ENCODE measurements at regions of chr20 and their contacts with region 1.

Region 1: GRCh38 chr20:17682103-17682888 is at the start of gene RRBP1:
- DNase-seq: peak; percentile 97
- ATAC-seq: peak; percentile 92
- H3K4me3 ChIP-seq: peak within 1 kb of the TSS; percentile 96
- H3K27ac ChIP-seq: peak within 1 kb of the TSS; percentile 94
- H3K4me1 ChIP-seq: peaks cover 13% of the 10 kb centered on the region
- H3K27me3 ChIP-seq: peaks cover 4% of the 10 kb centered on the region
- CTCF ChIP-seq: peak; percentile 69
- POLR2A ChIP-seq: peak; percentile 97
- RAD21 ChIP-seq: peak; percentile 27; the same call in 1 of the 2 replicates
- total RNA-seq, gene RRBP1: 90.2 and 99.7 TPM in 2 replicates

Region 2: DNA sequence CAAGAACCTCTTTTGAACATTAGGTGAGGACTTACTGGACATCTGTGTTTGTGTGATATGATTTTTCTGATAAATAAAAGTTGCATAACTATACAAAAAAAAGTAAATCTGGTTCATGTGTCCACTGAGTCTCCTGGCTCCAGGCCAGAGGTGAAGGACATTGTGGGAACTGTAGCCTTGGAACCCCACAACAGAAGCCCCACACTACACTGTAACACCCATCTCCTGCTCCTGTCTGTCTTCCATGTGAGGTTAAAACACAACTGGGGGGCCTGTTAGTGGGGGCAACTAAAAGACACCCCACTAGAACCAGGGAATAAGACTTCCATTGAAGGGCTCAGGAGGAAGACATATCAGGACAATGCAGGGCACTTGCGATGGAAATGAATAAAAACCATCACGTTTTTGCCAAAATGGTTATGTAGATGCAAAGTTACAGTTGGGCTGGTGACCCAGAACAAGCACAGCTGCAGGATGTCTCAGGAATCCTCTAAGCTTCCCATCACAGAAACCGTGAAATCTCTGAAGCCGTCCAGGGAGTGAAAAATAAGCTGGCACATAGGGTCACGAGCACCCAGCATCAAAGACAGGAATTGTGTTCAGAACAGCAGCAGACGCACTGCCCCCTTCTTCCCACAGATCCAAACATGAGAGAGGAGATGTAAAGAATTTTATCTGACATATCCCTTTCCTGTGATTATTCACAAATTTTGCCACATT is 492.2 kb before region 1 on chr20:
- CTCF ChIA-PET with region 1: no interaction called
- POLR2A ChIA-PET with region 1: no interaction called
- dilution Hi-C with region 1: no loop called
- in situ Hi-C with region 1: no loop called
- intact Hi-C with region 1: no loop called
- DNase-seq: no peak
- ATAC-seq: no peak
- H3K4me3 ChIP-seq: no peak overlapping the region
- H3K27ac ChIP-seq: no peak overlapping the region
- H3K4me1 ChIP-seq: no peaks in the 10 kb centered on the region
- H3K27me3 ChIP-seq: no peaks in the 10 kb centered on the region
- CTCF ChIP-seq: no peak
- POLR2A ChIP-seq: no peak
- RAD21 ChIP-seq: no peak

Region 3: DNA sequence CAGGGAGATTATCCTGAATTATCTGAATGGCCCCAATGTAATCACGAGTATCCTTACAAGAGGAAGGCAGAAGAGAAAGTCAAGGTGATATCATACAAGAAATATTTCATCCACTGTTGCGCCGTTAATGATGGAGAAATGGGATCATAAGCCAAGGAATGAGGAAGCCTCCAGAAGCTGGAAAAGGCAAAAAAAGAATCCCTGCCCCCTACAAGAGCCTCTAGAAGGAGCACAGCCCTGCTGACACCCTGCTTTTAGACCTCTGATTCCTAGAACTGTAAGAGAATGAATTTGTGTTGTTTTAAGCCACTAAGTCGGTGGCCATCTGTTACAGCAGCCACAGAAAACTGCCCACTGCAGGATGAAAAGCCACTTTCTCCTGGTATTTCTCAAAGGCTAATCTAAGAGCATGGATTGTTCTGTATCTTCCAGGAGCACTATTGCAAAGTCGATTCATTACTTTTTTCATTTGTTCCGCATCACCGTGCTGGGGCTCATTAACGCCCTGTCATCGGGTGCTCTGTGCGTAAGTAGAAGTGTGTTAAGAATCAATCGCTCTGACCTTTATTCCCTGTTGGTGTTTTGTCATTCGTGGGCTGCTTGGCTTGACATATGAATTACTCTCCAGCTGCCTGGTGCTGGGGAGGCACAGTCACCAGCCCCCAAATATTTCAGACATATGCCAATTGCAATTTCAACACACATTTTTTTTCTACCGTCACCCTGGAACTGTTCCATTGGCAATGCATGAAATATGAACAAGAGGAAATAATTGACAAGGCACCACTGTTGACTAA is 338.4 kb before region 1 on chr20:
- CTCF ChIA-PET with region 1: no interaction called
- POLR2A ChIA-PET with region 1: no interaction called
- dilution Hi-C with region 1: no loop called
- in situ Hi-C with region 1: no loop called
- intact Hi-C with region 1: no loop called
- DNase-seq: no peak
- ATAC-seq: no peak
- H3K4me3 ChIP-seq: no peak overlapping the region
- H3K27ac ChIP-seq: peak overlapping the region; percentile 24; the same call in 1 of the 2 replicates
- H3K4me1 ChIP-seq: peaks cover 4% of the 10 kb centered on the region; the same call in 1 of the 2 replicates
- H3K27me3 ChIP-seq: no peaks in the 10 kb centered on the region; the same call in 1 of the 2 replicates
- CTCF ChIP-seq: no peak
- POLR2A ChIP-seq: no peak
- RAD21 ChIP-seq: no peak

Region 4: DNA sequence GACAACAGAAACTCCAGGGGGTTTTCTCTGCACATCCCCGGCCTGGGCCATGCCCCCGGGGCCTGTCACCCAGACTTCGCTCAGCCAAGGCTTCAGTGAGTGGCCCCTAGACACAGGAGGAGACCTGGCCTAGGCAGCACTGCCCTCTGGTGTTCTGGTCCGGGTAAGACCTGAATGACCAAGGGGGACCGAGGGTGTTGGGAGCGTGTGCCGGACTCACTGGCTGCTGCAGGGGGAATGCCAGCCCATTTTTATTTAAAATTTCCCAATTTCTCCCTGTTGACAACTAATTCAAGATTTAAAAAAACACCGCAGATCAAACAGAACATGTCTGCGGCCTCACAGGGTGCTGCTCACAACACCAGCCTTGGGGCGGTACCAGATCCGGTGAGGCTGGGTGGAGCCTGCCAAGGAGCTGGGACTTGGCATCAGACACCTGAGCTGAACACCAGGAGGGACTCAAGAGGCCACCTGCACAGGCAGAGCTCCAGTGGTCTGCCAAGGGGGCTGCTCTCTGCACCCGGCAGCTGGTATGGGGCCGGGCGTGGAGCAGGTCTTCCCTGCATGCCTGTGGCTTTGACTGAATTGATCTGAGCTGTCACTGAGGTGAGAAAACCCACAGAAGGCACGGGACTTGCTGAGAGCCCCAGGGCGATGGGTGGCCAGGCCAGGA is 64.6 kb before region 1 on chr20:
- CTCF ChIA-PET with region 1: no interaction called
- POLR2A ChIA-PET with region 1: no interaction called
- dilution Hi-C with region 1: no loop called
- in situ Hi-C with region 1: no loop called
- intact Hi-C with region 1: no loop called
- DNase-seq: no peak
- ATAC-seq: peak; percentile 38
- H3K4me3 ChIP-seq: no peak overlapping the region
- H3K27ac ChIP-seq: no peak overlapping the region
- H3K4me1 ChIP-seq: no peaks in the 10 kb centered on the region; the same call in 1 of the 2 replicates
- H3K27me3 ChIP-seq: no peaks in the 10 kb centered on the region
- CTCF ChIP-seq: peak; percentile 53
- POLR2A ChIP-seq: no peak
- RAD21 ChIP-seq: peak; percentile 70

Region 5: GRCh38 chr20:17749975-17750721 is 67.9 kb after region 1 on chr20:
- CTCF ChIA-PET with region 1: no interaction called
- POLR2A ChIA-PET with region 1: no interaction called
- dilution Hi-C with region 1: no loop called
- in situ Hi-C with region 1: no loop called
- intact Hi-C with region 1: loop called (anchors 5 kb)
- DNase-seq: peak; percentile 65
- ATAC-seq: 0 out of 2 replicates have a peak, but pooled peaks have one; percentile 31
- H3K4me3 ChIP-seq: no peak overlapping the region
- H3K27ac ChIP-seq: no peak overlapping the region
- H3K4me1 ChIP-seq: peaks cover 8% of the 10 kb centered on the region
- H3K27me3 ChIP-seq: peaks cover 25% of the 10 kb centered on the region
- CTCF ChIP-seq: no peak
- POLR2A ChIP-seq: no peak
- RAD21 ChIP-seq: no peak

Region 6: GRCh38 chr20:17843246-17844132 is 161.2 kb after region 1 on chr20:
- CTCF ChIA-PET with region 1: interaction called, 8 read pairs
- POLR2A ChIA-PET with region 1: interaction called, 5 read pairs
- dilution Hi-C with region 1: no loop called
- in situ Hi-C with region 1: no loop called
- intact Hi-C with region 1: loop called (anchors 2 kb)
- DNase-seq: peak; percentile 97
- ATAC-seq: peak; percentile 87
- H3K4me3 ChIP-seq: no peak overlapping the region; the same call in 1 of the 2 replicates
- H3K27ac ChIP-seq: peak overlapping the region; percentile 90
- H3K4me1 ChIP-seq: peaks cover 24% of the 10 kb centered on the region
- H3K27me3 ChIP-seq: no peaks in the 10 kb centered on the region
- CTCF ChIP-seq: no peak
- POLR2A ChIP-seq: no peak; the same call in 1 of the 2 replicates
- RAD21 ChIP-seq: peak; percentile 23; the same call in 1 of the 2 replicates

Region 7: GRCh38 chr20:17898548-17898994 is 216.3 kb after region 1 on chr20:
- CTCF ChIA-PET with region 1: interaction called, 4 read pairs
- POLR2A ChIA-PET with region 1: interaction called, 4 read pairs
- dilution Hi-C with region 1: no loop called
- in situ Hi-C with region 1: loop called (anchors 5 kb)
- intact Hi-C with region 1: loop called (anchors 1 kb)
- DNase-seq: peak; percentile 75
- ATAC-seq: peak; percentile 70
- H3K4me3 ChIP-seq: no peak overlapping the region
- H3K27ac ChIP-seq: no peak overlapping the region
- H3K4me1 ChIP-seq: peaks cover 13% of the 10 kb centered on the region
- H3K27me3 ChIP-seq: no peaks in the 10 kb centered on the region
- CTCF ChIP-seq: peak; percentile 95
- POLR2A ChIP-seq: 0 out of 2 replicates have a peak, but pooled peaks have one; percentile 34
- RAD21 ChIP-seq: peak; percentile 99

Region 8: GRCh38 chr20:17938871-17939619 is 256.7 kb after region 1 on chr20:
- CTCF ChIA-PET with region 1: interaction called, 3 read pairs
- POLR2A ChIA-PET with region 1: no interaction called
- dilution Hi-C with region 1: no loop called
- in situ Hi-C with region 1: no loop called
- intact Hi-C with region 1: loop called (anchors 1 kb)
- DNase-seq: peak; percentile 67
- ATAC-seq: peak; percentile 77
- H3K4me3 ChIP-seq: no peak overlapping the region
- H3K27ac ChIP-seq: no peak overlapping the region; the same call in 1 of the 2 replicates
- H3K4me1 ChIP-seq: peaks cover 23% of the 10 kb centered on the region
- H3K27me3 ChIP-seq: no peaks in the 10 kb centered on the region
- CTCF ChIP-seq: peak; percentile 92
- POLR2A ChIP-seq: no peak; the same call in 1 of the 2 replicates
- RAD21 ChIP-seq: peak; percentile 94